ENCODE measurements at regions of chr22 and their contacts with region 1.

Region 1: GRCh38 chr22:37498289-37498909 is 12.2 kb upstream of the MFNG start:
- DNase-seq: peak; percentile 51 to 80 (median 72)
- ATAC-seq: peak; percentile 94
- H3K4me3 ChIP-seq: no peak overlapping the region
- H3K4me3 Mint-ChIP-seq: no peak overlapping the region
- H3K27ac ChIP-seq: no peak overlapping the region
- H3K27ac Mint-ChIP-seq: no peak overlapping the region
- H3K4me1 ChIP-seq: peaks cover 4 to 21% of the 10 kb centered on the region in 2 donors
- H3K4me1 Mint-ChIP-seq: peaks cover 17 to 35% (median 28%) of the 10 kb centered on the region in 7 donors
- H3K27me3 ChIP-seq: no peaks in the 10 kb centered on the region
- H3K27me3 Mint-ChIP-seq: peaks cover 0 to 5% (median 0%) of the 10 kb centered on the region in 5 donors

Region 2: GRCh38 chr22:37457093-37457893 is 41.1 kb before region 1 on chr22:
- CTCF ChIA-PET with region 1: no interaction called
- POLR2A ChIA-PET with region 1: no interaction called
- intact Hi-C with region 1: loop called in 1 of 2 experiments (anchors 1 kb)
- DNase-seq: peak; percentile 66 to 88 (median 77)
- ATAC-seq: peak; percentile 96
- H3K4me3 ChIP-seq: no peak overlapping the region
- H3K4me3 Mint-ChIP-seq: no peak overlapping the region
- H3K27ac ChIP-seq: no peak overlapping the region
- H3K27ac Mint-ChIP-seq: peak overlapping the region in 1 of 9 donors; percentile 51
- H3K4me1 ChIP-seq: no peaks in the 10 kb centered on the region
- H3K4me1 Mint-ChIP-seq: peaks cover 0 to 9% (median 5%) of the 10 kb centered on the region in 7 donors
- H3K27me3 ChIP-seq: no peaks in the 10 kb centered on the region
- H3K27me3 Mint-ChIP-seq: no peaks in the 10 kb centered on the region

Region 3: DNA sequence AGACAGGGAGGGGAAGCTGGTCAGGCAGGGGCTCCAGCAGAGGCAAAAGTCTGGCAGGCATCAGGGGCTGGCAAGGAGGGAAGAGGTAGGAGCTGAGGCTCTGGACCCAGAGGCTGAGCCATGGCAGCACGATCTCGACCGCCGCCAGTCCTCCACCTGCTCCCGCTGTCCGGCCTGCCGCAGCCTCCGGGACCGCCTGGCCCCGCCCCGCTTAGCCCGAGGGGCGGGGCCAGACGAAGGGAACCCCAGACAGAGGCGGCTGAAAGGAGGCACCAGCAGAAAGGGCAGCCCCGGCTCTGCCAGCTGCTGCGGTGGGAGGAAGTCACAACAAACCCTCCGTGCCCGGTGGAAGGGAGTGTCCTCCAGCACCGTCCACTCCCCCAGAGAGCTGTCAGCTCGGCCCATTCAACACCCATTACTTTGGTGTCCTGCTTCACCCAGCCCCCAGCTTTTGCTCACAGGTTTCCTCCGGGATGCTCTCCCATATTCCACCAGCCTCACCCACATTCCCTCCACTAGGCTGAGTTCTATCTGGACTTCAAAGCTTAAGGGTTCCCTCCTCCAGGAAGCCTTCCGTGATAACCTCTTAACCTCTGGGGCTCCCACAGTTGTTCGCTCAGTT is 12.1 kb before region 1 on chr22 and contains the start of gene MFNG:
- CTCF ChIA-PET with region 1: interaction called, 10 read pairs
- POLR2A ChIA-PET with region 1: interaction called, 37 read pairs
- intact Hi-C with region 1: loop called in 1 of 2 experiments (anchors 1 kb)
- DNase-seq: peak; percentile 57 to 82 (median 61)
- ATAC-seq: peak; percentile 81
- H3K4me3 ChIP-seq: peak within 1 kb of the TSS; percentile 84
- H3K4me3 Mint-ChIP-seq: peak within 1 kb of the TSS; percentile 91 to 99 (median 96)
- H3K27ac ChIP-seq: peak within 1 kb of the TSS; percentile 86
- H3K27ac Mint-ChIP-seq: peak within 1 kb of the TSS; percentile 94 to 99 (median 98)
- H3K4me1 ChIP-seq: peaks cover 25 to 57% of the 10 kb centered on the region in 2 donors
- H3K4me1 Mint-ChIP-seq: peaks cover 53 to 79% (median 68%) of the 10 kb centered on the region in 7 donors
- H3K27me3 ChIP-seq: no peaks in the 10 kb centered on the region
- H3K27me3 Mint-ChIP-seq: no peaks in the 10 kb centered on the region
- total RNA-seq, gene MFNG: 146 to 223 (median 203) TPM

Measured in naive thymus-derived CD4-positive, alpha-beta T cell (primary cell).